ENCODE measurements at regions of chr18 and their contacts with region 1.

Region 1: GRCh38 chr18:11654736-11655605 is 34.1 kb upstream of the GNAL start:
- DNase-seq: peak; percentile 66
- H3K4me3 Mint-ChIP-seq: no peak overlapping the region
- H3K27ac Mint-ChIP-seq: no peak overlapping the region
- H3K4me1 Mint-ChIP-seq: peaks cover 3% of the 10 kb centered on the region
- H3K27me3 Mint-ChIP-seq: peaks cover 43% of the 10 kb centered on the region

Region 2: GRCh38 chr18:11387880-11388279 is 267.1 kb before region 1 on chr18:
- CTCF ChIA-PET with region 1: no interaction called
- DNase-seq: no peak
- H3K4me3 Mint-ChIP-seq: no peak overlapping the region
- H3K27ac Mint-ChIP-seq: no peak overlapping the region
- H3K4me1 Mint-ChIP-seq: no peaks in the 10 kb centered on the region
- H3K27me3 Mint-ChIP-seq: no peaks in the 10 kb centered on the region

Region 3: DNA sequence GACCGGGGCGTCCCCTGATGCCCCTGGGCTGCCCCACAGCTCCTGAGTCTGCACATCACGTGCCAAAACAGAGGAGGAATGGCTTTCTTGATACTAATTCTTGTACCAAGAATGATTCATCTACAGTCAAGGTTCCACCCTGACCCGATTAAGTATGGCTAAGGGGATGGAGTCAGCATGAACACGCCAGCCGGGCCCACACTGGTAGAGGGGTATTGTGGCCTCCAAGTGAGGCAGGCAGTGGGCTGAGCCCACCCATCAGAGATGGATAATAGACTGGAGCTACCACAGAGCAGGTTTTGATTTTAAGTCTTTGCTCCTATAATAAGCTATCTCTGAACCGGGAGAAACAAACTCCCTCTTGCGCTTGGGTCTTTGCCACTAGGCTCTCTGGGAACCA is 16.2 kb after region 1 on chr18:
- CTCF ChIA-PET with region 1: interaction called, 12 read pairs
- DNase-seq: no peak
- H3K4me3 Mint-ChIP-seq: no peak overlapping the region
- H3K27ac Mint-ChIP-seq: no peak overlapping the region
- H3K4me1 Mint-ChIP-seq: no peaks in the 10 kb centered on the region
- H3K27me3 Mint-ChIP-seq: peaks cover 10% of the 10 kb centered on the region

Region 4: DNA sequence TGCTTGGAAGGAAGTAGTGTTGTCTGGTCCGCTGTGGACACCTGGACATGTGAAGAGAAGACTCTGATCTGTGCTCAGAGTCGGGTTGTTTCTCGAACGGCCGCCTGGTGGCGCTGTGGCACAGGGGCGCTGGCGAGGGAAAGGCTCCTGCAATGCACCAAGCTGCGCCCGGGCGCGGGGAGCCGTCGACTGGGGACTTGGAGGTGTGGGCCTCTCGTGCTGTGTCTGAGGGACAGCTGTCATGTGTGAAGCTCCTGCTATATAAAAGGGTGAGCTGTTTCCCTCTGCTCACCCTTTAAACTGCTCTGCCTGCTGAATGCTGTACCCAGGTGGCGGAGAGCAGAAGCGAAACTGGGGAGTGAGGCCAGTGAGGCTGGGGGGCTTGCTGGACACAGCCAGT is 78.1 kb after region 1 on chr18:
- CTCF ChIA-PET with region 1: interaction called, 17 read pairs
- DNase-seq: peak; percentile 77
- H3K4me3 Mint-ChIP-seq: no peak overlapping the region
- H3K27ac Mint-ChIP-seq: no peak overlapping the region
- H3K4me1 Mint-ChIP-seq: peaks cover 3% of the 10 kb centered on the region
- H3K27me3 Mint-ChIP-seq: peaks cover 26% of the 10 kb centered on the region

Region 5: GRCh38 chr18:11741505-11742145 is 86.7 kb after region 1 on chr18:
- CTCF ChIA-PET with region 1: interaction called, 20 read pairs
- DNase-seq: no peak
- H3K4me3 Mint-ChIP-seq: no peak overlapping the region
- H3K27ac Mint-ChIP-seq: no peak overlapping the region
- H3K4me1 Mint-ChIP-seq: no peaks in the 10 kb centered on the region
- H3K27me3 Mint-ChIP-seq: peaks cover 30% of the 10 kb centered on the region

Region 6: DNA sequence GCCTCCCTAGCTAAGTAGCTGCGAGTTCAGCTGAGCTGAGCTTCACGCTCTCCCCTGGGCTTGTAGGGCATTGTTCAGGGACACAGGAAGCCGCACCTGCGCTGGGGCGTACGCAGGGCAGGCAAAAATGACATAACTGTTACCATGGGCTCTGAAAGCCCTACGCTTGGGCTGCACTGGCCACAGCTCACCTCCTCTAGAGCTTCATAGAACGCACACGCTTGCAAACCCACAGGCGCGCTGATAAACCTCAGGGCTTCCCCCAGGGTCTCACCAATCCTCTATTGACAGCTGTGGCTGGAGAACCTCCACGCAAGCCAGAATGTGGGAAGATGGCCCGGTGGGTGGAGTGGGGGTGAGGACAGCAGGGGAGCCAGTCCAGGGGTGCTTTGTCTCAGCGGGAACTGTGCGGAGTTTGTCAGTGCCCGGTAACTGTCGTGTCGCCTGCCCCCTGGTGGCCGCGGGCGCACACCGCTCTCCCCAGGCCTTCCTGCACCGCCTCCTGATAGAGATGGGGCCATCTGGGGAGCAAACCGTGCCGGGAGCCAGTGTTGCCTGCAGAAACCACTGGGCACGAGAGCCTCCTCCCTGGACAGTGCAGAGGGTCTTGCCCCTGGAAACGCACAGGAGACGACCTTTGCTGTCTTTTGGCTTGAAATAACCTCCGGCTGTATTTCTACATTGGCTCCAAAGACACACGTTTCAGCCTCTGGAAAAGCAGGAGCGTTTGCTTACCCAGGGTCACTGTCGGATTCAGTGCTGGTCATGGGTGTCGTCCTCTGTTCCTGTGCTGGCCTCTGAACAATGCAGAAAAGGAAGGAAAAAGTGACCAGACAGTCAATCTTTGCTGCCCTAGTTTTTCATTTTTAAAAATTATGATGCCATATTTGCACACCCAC is 582.2 kb after region 1 on chr18:
- CTCF ChIA-PET with region 1: interaction called, 10 read pairs
- DNase-seq: peak; percentile 76
- H3K4me3 Mint-ChIP-seq: no peak overlapping the region
- H3K27ac Mint-ChIP-seq: no peak overlapping the region
- H3K4me1 Mint-ChIP-seq: no peaks in the 10 kb centered on the region
- H3K27me3 Mint-ChIP-seq: peaks cover 30% of the 10 kb centered on the region